ENCODE measurements at regions of chr4 and their contacts with region 1.

Region 1: DNA sequence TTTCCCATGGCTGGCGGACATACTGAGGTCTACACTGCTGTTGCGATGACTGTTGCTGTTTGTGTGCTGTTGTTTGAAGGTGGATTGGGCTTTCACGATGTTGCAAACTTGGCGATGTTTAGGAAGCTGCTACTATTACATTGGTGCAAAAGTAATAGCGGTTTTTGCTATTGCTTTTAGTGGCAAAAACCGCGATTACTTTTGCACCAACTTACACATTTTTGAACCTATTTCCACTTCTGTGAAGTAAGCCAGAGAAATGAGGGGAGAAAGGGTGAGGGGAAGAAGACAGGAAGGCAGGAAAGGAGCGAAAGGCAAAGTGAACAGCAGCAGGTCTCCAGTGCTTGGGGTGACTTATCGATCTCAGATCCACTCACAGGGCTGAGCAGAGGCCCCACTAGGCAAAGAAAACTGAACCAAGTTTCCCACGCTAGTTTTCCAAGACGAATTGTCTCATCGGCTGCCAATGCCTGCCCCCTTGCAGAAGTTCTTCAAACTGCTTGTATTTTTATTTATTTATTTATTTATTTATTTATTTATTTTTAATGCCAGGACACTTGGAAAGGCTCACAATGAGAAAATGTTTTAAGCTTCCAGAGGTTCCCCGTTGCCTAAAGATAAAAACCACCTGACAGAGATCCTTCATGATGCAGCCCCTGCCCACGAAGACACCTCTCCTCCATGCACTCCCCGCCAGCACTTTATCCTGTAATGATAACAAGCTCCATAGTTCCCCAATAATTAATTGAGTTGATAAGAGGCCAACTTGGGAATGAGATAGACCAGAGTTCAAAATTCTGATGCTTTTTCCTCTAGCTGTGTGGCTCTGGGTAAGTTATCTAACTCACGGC is 43.3 kb downstream of the QDPR start:
- DNase-seq: no peak
- CTCF ChIP-seq: no peak

Region 2: GRCh38 chr4:16289897-16290554 is 1178.6 kb before region 1 on chr4:
- in situ Hi-C with region 1: loop called (anchors 25 kb)
- DNase-seq: peak; percentile 35
- CTCF ChIP-seq: peak; percentile 32

Region 3: GRCh38 chr4:16794816-16795445 is 673.7 kb before region 1 on chr4:
- in situ Hi-C with region 1: no loop called
- DNase-seq: peak; percentile 34
- CTCF ChIP-seq: peak; percentile 42